ENCODE measurements at regions of chr14 and their contacts with region 1.

Region 1: GRCh38 chr14:106831322-106831720 is 1304.9 kb downstream of the TMEM121 start:
- DNase-seq: peak; percentile 70
- ATAC-seq: peak; percentile 56
- H3K4me3 Mint-ChIP-seq: no peak overlapping the region
- H3K27ac Mint-ChIP-seq: no peak overlapping the region
- H3K4me1 Mint-ChIP-seq: no peaks in the 10 kb centered on the region
- H3K27me3 Mint-ChIP-seq: peaks cover 39% of the 10 kb centered on the region

Region 2: DNA sequence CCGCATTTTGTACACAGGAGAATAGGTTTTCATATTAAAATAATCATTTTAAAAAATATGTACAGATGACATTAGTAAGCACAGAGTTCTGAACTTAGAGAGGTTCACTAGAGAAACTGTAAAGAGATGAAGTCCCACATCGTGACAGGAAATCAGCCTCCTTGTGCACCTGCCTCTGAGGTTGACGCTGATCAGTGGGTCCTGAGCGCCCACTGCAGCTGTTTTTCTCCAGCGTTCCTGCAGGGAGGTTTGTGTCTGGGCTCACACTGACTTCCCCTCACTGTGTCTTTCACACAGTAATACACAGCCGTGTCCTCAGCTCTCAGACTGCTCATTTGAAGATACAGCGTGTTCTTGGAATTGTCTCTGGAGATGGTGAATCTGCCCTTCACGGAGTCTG is 743.5 kb before region 1 on chr14:
- CTCF ChIA-PET with region 1: no interaction called
- DNase-seq: no peak
- ATAC-seq: no peak
- H3K4me3 Mint-ChIP-seq: no peak overlapping the region
- H3K27ac Mint-ChIP-seq: no peak overlapping the region
- H3K4me1 Mint-ChIP-seq: peaks cover 32% of the 10 kb centered on the region
- H3K27me3 Mint-ChIP-seq: peaks cover 22% of the 10 kb centered on the region

Region 3: DNA sequence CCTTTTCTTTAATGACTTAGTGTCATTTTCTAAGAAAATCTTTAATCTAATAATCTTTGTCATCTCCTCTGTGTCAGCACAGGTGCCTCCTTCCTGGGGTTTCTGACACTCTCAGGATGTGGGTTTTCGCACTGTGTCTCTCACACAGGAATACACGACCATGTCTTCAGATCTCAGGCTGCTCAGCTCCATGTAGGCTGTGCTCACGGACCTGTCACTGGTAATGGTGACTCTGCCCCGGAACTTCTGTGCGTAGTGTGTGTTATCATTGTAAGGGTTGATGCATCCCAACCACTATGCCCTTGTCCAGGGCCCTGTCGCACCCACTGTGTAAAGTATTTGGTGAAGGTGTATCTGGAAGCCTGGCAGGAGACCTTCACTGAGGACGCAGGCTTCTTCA is 657.1 kb before region 1 on chr14:
- CTCF ChIA-PET with region 1: no interaction called
- DNase-seq: peak; percentile 81
- ATAC-seq: peak; percentile 51
- H3K4me3 Mint-ChIP-seq: peak overlapping the region; percentile 11
- H3K27ac Mint-ChIP-seq: peak overlapping the region; percentile 63
- H3K4me1 Mint-ChIP-seq: peaks cover 52% of the 10 kb centered on the region
- H3K27me3 Mint-ChIP-seq: peaks cover 54% of the 10 kb centered on the region

Region 4: DNA sequence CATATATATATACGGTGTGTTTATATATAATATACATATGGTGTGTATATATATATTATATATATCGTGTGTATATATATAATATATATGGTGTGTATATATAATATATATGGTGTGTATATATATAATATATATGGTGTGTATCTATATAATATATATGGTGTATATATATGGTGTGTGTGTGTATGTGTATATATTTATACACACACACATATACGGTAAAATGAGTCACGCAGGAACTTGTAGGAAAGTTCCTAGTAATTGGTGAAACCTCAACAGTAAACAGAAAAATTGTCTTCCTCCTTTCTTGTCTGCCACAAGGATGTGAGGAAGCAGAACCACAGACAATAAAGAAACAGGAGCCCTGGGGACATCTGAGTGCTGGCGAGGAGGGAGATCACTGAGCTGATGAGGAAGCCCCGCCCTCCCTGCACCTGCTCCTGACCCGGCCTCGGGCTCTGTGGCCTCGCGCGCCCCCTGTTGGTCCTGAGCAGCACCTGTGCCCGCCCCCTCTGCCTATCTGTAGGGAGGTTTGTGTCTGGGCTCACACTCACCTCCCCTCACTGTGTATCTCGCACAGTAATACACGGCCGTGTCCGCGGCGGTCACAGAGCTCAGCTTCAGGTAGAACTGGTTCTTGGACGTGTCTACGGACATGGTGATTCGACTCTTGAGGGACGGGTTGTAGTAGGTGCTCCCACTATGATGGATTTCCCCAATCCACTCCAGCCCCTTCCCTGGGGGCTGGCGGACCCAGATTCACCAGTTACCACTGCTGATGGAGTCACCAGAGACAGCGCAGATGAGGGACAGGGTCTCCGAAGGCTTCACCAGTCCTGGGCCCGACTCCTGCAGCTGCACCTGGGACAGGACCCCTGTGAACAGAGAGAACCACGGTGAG is 225.5 kb before region 1 on chr14:
- CTCF ChIA-PET with region 1: no interaction called
- DNase-seq: peak; percentile 87
- ATAC-seq: peak; percentile 98
- H3K4me3 Mint-ChIP-seq: no peak overlapping the region
- H3K27ac Mint-ChIP-seq: no peak overlapping the region
- H3K4me1 Mint-ChIP-seq: peaks cover 5% of the 10 kb centered on the region
- H3K27me3 Mint-ChIP-seq: peaks cover 83% of the 10 kb centered on the region

Region 5: DNA sequence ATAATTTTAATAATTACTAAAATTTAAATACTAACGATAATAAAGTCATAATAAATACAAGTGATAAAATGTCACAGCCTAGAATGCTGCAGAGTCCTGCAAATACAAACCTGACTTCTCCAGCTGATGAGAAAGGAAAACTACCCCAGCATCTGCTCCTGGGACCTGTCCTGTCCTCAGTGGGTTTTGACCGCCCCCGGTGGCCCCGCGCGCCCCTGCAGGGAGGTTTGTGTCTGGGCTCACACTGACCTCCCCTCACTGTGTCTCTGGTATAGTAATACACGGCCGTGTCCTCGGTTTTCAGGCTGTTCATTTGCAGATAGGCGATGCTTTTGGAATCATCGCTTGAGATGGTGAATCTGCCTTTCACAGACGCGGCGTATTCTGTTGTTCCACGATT is 165.5 kb before region 1 on chr14:
- CTCF ChIA-PET with region 1: interaction called, 12 read pairs
- DNase-seq: no peak
- ATAC-seq: no peak
- H3K4me3 Mint-ChIP-seq: no peak overlapping the region
- H3K27ac Mint-ChIP-seq: no peak overlapping the region
- H3K4me1 Mint-ChIP-seq: peaks cover 7% of the 10 kb centered on the region
- H3K27me3 Mint-ChIP-seq: peaks cover 56% of the 10 kb centered on the region

Region 6: DNA sequence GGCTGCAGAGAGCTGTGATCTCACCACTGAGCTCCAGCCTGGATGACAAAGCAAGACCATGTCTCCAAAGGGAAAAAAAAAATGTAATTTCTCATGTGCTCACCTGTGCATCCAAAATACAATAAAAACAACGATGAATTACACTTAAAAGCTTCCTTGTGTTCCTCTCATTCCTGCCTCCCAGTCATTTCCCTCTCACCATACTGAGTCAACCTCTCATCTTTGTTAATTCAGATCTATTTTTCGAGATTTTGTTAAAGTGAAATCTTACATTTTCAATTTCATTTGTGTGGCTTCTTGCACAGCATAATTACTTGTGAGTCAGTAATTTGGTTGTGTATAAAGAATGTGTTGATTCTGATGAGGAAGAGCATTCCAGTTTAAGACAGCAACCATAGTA is 101.8 kb before region 1 on chr14:
- CTCF ChIA-PET with region 1: no interaction called
- DNase-seq: no peak
- ATAC-seq: no peak
- H3K4me3 Mint-ChIP-seq: no peak overlapping the region
- H3K27ac Mint-ChIP-seq: no peak overlapping the region
- H3K4me1 Mint-ChIP-seq: peaks cover 9% of the 10 kb centered on the region
- H3K27me3 Mint-ChIP-seq: peaks cover 11% of the 10 kb centered on the region

Region 7: DNA sequence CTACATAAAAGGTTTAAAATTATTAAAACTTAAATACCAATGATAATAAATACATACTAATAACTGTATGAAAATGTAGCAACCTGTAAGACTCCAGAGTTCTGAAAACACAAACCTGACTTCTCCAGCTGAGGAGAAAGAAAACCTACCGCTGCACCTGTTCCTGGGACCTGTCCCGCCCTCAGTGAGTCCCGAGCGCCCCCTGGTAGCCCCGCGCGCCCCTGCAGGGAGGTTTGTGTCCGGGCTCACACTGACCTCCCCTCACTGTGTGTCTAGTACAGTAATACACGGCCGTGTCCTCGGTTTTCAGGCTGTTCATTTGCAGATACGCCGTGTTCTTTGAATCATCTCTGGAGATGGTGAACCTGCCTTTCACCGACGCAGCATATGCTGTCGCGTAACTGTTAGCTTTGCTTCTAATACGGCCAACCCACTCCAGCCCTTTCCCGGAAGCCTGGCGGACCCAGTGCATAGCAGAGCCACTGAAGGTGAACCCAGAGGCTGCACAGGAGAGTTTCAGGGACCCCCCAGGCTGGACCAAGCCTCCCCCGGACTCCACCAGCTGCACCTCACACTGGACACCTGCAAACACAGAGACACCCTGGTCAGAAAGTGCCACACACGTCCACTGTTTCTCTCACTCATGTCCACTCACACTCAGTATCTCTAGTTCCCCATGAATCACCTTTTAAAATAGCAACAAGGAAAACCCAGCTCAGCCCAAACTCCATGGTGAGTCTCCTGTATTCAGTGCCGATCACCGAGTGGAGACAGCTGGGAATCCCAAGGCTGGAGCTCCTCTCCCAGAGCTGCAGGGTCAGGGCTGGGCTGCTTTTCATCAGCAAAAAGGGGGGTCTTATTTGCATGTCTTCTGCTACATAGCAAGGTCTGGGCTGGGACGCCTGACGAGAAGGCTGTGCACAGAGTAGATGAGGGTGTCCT is 28.6 kb before region 1 on chr14:
- CTCF ChIA-PET with region 1: interaction called, 17 read pairs
- DNase-seq: no peak
- ATAC-seq: no peak
- H3K4me3 Mint-ChIP-seq: no peak overlapping the region
- H3K27ac Mint-ChIP-seq: no peak overlapping the region
- H3K4me1 Mint-ChIP-seq: no peaks in the 10 kb centered on the region
- H3K27me3 Mint-ChIP-seq: peaks cover 78% of the 10 kb centered on the region

Region 8: DNA sequence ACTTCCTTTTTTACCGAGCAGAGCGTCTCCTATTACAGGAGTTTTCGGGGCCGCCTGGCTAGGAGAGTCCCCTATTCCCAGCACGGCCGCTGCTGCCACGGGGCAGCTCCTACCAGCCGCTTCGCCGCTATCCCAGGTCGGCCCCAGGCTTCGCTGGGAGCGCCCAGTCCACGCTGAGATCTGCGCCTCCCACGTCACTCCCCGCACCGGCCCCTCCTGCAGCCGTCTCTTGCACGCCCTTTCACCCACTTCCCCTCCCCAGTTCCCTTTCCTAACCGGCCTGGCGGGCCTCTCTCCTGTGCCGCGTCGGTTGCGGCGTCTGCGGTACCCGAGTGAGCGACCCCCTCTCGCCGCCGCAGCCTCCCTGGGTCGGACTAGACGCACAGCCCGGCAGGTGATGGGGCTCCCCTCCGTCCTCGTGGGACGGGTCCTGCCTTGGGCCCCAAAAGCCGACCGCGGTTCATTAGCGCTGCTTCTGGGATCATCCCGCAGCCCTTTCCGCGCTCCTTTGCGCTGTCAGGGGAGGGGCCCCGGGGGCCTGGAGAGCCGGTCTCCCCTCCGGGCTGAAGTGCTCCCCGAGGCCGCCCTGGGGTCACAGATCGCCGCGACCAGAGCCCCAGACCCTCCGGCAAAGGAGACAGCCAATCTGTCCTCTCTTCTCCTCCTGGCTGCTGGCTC is 13.4 kb after region 1 on chr14:
- CTCF ChIA-PET with region 1: interaction called, 24 read pairs
- DNase-seq: peak; percentile 68
- ATAC-seq: peak; percentile 78
- H3K4me3 Mint-ChIP-seq: peak overlapping the region; percentile 77
- H3K27ac Mint-ChIP-seq: peak overlapping the region; percentile 58
- H3K4me1 Mint-ChIP-seq: peaks cover 15% of the 10 kb centered on the region
- H3K27me3 Mint-ChIP-seq: peaks cover 40% of the 10 kb centered on the region

Region 9: GRCh38 chr14:106872611-106873446 is 41.5 kb after region 1 on chr14:
- CTCF ChIA-PET with region 1: interaction called, 25 read pairs
- DNase-seq: peak; percentile 87
- ATAC-seq: peak; percentile 80
- H3K4me3 Mint-ChIP-seq: no peak overlapping the region
- H3K27ac Mint-ChIP-seq: no peak overlapping the region
- H3K4me1 Mint-ChIP-seq: peaks cover 23% of the 10 kb centered on the region
- H3K27me3 Mint-ChIP-seq: peaks cover 37% of the 10 kb centered on the region